ENCODE measurements at regions of chr4 and their contacts with region 1.

Region 1: DNA sequence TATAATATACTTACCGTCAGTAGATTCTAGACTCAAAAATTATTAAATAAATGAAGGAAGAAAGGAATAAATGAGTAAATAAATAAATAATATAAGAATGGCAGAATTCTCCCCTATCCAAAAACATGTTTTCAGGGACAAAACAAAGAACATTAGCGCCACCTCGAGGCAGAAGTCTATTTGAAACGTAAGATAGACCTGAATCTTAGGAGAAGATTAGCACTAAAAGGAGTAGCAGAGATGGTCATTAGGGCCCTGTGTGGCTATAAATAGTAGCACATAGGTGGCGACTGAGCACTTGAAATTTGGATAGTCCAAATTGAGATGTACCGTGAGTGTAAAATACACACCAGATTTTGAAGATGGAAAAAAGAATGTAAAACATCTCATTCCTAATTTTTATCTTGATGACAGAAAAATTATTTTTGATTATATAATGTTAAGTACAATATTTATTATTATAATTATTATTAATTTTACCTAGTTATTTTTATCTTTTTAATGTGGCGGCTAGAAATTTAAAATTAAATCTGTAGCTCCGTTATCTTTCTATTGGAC is 24.3 kb upstream of the SRD5A3 start:
- DNase-seq: peak; percentile 59
- ATAC-seq: peak; percentile 34; the same call in 1 of the 3 replicates
- H3K4me3 ChIP-seq: no peak overlapping the region
- H3K27ac ChIP-seq: no peak overlapping the region
- H3K4me1 ChIP-seq: no peaks in the 10 kb centered on the region
- H3K27me3 ChIP-seq: peaks cover 0 to 5% of the 10 kb centered on the region in 2 experiments; a peak in 1 of 5 replicates
- CTCF ChIP-seq: peak; percentile 62
- EP300 ChIP-seq: no peak
- POLR2A ChIP-seq: no peak
- RAD21 ChIP-seq: no peak

Region 2: GRCh38 chr4:54971474-54971950 is 350.3 kb before region 1 on chr4:
- CTCF ChIA-PET with region 1: interaction called, 17 read pairs
- POLR2A ChIA-PET with region 1: no interaction called
- in situ Hi-C with region 1: loop called (anchors 5 kb)
- intact Hi-C with region 1: loop called (anchors 1 kb)
- DNase-seq: peak; percentile 18
- ATAC-seq: peak; percentile 93
- H3K4me3 ChIP-seq: no peak overlapping the region
- H3K27ac ChIP-seq: no peak overlapping the region
- H3K4me1 ChIP-seq: no peaks in the 10 kb centered on the region
- H3K27me3 ChIP-seq: no peaks in the 10 kb centered on the region
- CTCF ChIP-seq: peak; percentile 68
- EP300 ChIP-seq: no peak
- POLR2A ChIP-seq: no peak
- RAD21 ChIP-seq: 0 out of 2 replicates have a peak, but pooled peaks have one; percentile 26

Region 3: DNA sequence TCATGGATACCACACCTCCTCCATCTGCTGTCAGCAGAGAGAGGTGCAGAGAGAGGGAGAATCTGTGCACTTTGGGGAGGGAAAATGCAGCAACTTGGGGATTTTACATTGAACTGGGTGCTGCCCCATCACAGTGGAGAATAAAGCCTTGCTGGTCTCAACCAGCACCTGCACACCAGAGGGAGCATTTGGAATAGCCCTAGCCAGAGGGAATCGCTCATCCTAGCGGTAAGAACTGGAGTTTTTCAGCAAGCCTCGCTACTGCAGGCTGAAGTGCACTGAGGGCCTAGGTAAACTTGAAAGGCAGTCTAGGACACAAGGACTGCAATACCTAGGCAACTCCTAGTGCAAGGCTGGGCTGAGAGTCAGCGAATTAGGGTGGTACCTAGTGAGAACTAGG is 345.1 kb before region 1 on chr4:
- CTCF ChIA-PET with region 1: interaction called, 17 read pairs
- POLR2A ChIA-PET with region 1: no interaction called
- in situ Hi-C with region 1: loop called (anchors 5 kb)
- intact Hi-C with region 1: loop called (anchors 1 kb)
- DNase-seq: peak; percentile 8
- ATAC-seq: peak; percentile 94
- H3K4me3 ChIP-seq: no peak overlapping the region
- H3K27ac ChIP-seq: no peak overlapping the region
- H3K4me1 ChIP-seq: no peaks in the 10 kb centered on the region
- H3K27me3 ChIP-seq: no peaks in the 10 kb centered on the region
- CTCF ChIP-seq: no peak
- EP300 ChIP-seq: no peak
- POLR2A ChIP-seq: no peak
- RAD21 ChIP-seq: no peak

Region 4: DNA sequence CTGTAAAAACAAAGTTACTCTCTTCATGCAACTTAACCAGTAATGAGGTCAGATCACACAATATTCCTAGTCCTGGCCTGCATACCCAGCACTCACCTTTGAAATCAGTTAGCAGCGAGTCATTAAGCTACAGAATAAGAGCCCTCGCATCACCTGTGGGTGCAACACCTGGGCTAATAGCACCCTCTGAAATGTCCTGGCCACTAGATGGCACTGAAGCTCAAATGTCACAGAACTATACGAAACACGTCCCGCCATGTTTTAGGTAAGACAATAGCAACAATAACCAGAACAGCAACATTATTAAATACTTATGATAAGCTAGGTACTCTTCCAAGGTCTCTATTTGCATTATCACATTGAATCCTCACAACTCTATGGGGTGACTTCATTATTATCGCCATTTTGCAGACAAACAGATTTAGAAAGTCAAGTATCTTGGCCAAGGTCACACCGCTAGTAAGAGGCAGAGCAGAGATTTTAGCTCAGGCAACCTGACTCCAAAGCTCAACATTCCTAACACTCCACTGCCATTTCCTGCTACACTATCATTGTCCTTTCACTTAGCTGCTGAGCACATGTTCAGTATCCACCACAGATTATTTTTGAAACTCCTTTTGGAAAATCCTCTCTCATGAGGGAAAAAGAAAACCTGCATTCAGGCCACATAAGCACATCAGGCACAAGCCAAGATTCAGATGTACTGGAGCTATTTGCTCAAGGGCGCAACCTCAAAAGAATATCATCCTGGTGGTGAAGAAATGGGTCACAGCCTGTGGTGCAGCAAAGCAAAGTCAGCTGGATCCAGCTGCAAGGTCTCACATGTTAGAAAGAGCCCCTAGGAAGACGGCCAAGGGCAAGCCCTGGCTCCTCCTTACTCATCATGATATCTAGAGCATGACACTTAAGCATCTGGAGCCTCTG is 136.9 kb before region 1 on chr4:
- CTCF ChIA-PET with region 1: interaction called, 7 read pairs
- POLR2A ChIA-PET with region 1: no interaction called
- in situ Hi-C with region 1: no loop called
- intact Hi-C with region 1: loop called (anchors 1 kb)
- DNase-seq: peak; percentile 35
- ATAC-seq: peak; percentile 84
- H3K4me3 ChIP-seq: no peak overlapping the region; a peak in 1 of 6 replicates
- H3K27ac ChIP-seq: no peak overlapping the region
- H3K4me1 ChIP-seq: no peaks in the 10 kb centered on the region
- H3K27me3 ChIP-seq: no peaks in the 10 kb centered on the region
- CTCF ChIP-seq: peak; percentile 59
- EP300 ChIP-seq: no peak
- POLR2A ChIP-seq: no peak
- RAD21 ChIP-seq: no peak

Region 5: GRCh38 chr4:55574252-55574651 is 252.5 kb after region 1 on chr4:
- CTCF ChIA-PET with region 1: no interaction called
- POLR2A ChIA-PET with region 1: no interaction called
- in situ Hi-C with region 1: no loop called
- intact Hi-C with region 1: no loop called
- DNase-seq: no peak
- ATAC-seq: no peak
- H3K4me3 ChIP-seq: no peak overlapping the region
- H3K27ac ChIP-seq: no peak overlapping the region
- H3K4me1 ChIP-seq: peaks cover under 1% of the 10 kb centered on the region; the same call in 1 of the 2 replicates
- H3K27me3 ChIP-seq: peaks cover 0 to 3% of the 10 kb centered on the region in 2 experiments; a peak in 1 of 5 replicates
- CTCF ChIP-seq: no peak
- EP300 ChIP-seq: no peak
- POLR2A ChIP-seq: no peak
- RAD21 ChIP-seq: no peak